GM12878 (cell line): ENCODE measurements at regions of chr3 and their contacts with region 1.

Region 1: GRCh38 chr3:128969993-128970739 is 23.7 kb downstream of the CFAP92 start:
- DNase-seq: no peak
- ATAC-seq: peak; percentile 82
- H3K4me3 ChIP-seq: no peak overlapping the region
- H3K27ac ChIP-seq: no peak overlapping the region
- H3K4me1 ChIP-seq: no peaks in the 10 kb centered on the region
- H3K27me3 ChIP-seq: peaks cover 0 to 2% of the 10 kb centered on the region in 2 experiments; a peak in 1 of 4 replicates
- CTCF ChIP-seq: peak; percentile 87 to 91 (median 89)
- EP300 ChIP-seq: no peak
- POLR2A ChIP-seq: no peak
- RAD21 ChIP-seq: peak; percentile 94

Region 2: GRCh38 chr3:128993461-128994173 is 23.5 kb after region 1 on chr3 and contains the start of gene CFAP92:
- CTCF ChIA-PET with region 1: interaction called, 18 read pairs
- POLR2A ChIA-PET with region 1: no interaction called
- RAD21 ChIA-PET with region 1: interaction called, 3 read pairs
- SMC1A ChIA-PET with region 1: interaction called, 3 read pairs
- in situ Hi-C with region 1: no loop called
- intact Hi-C with region 1: no loop called
- DNase-seq: no peak
- ATAC-seq: peak; percentile 99
- H3K4me3 ChIP-seq: no peak within 1 kb of the TSS
- H3K27ac ChIP-seq: no peak within 1 kb of the TSS
- H3K4me1 ChIP-seq: 0 out of 2 replicates have a peak, but pooled peaks cover 4% of the 10 kb centered on the region
- H3K27me3 ChIP-seq: peaks cover 2 to 8% of the 10 kb centered on the region in 2 experiments
- CTCF ChIP-seq: no peak
- EP300 ChIP-seq: no peak
- POLR2A ChIP-seq: no peak
- RAD21 ChIP-seq: no peak
- polyA plus RNA-seq, gene CFAP92: 0.05 TPM in 1 of 2 experiments, not detected in the other

Region 3: DNA sequence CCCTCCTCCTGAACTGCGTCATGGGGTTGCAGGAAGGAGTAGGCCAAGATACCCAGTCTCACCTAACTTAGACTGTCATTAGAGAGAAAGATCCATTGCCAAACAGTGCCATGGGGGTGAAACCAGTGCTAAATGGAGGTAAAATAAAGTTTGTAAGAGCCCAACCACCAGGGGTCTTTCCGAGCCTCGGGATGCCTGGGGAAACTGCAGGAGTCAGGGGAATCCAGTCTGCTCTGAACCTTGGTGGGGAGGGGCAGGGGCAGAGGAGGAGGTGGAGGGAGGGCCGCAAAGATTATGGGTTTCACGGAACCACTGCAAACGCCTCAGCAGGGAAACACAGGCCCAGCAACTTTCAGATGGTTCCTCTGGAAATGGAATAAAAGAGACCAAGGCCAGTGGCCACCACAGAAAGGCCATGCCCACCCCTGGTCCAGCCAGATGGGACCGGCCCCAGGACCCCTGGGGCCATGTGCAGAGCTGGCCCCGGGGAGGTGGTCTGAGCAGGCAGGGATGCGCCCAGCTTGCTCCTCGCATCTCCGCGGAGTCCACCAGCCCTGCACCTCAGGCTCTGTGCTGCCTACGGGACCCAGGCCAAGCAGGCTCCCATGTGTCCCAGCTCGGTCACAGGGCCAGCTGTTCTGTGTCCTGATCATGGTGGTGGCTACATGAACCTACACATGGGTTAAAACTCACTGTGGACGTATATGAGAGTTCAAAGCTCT is 70.6 kb after region 1 on chr3:
- CTCF ChIA-PET with region 1: interaction called, 10 read pairs
- POLR2A ChIA-PET with region 1: no interaction called
- RAD21 ChIA-PET with region 1: interaction called, 3 read pairs
- SMC1A ChIA-PET with region 1: no interaction called
- in situ Hi-C with region 1: no loop called
- intact Hi-C with region 1: no loop called
- DNase-seq: no peak
- ATAC-seq: no peak
- H3K4me3 ChIP-seq: no peak overlapping the region
- H3K27ac ChIP-seq: no peak overlapping the region
- H3K4me1 ChIP-seq: no peaks in the 10 kb centered on the region
- H3K27me3 ChIP-seq: no peaks in the 10 kb centered on the region; a peak in 2 of 4 replicates
- CTCF ChIP-seq: no peak
- EP300 ChIP-seq: no peak
- POLR2A ChIP-seq: no peak
- RAD21 ChIP-seq: no peak

Region 4: DNA sequence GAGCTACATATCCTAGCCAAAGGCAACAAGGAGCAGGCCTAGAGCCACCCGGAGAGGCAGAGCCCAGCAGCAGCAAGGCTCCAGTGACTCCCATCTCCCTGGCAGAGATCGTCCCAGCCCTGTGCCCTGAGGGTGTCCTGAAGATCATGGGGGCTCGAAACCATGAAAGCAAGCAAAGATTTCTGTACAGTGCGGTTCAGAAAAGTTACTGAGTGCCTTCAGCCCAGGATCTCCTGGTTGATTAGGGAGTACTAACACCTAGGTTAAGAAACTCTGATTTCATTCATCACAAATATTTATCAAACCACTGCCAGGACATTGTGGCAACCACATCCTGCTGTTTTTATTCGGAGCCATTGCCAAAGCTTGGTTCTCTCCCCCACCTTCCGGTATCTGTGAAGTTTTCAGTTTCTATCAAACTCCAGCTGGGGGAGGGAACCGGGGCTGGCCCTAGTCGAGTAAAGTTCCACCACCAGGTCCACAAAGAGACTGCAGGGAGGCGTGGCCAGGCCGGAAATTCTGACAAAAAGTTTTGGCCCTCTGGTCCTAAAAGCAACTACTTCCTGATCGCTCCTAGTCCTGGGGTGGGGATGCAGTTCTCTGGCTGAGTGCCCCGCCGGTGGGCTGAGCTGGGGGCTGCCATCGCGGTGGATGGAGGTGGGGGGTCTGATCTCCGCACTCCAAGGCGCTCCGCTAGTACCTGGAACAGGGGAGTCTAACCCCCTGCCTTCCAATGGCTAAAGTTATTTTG is 150.3 kb after region 1 on chr3:
- CTCF ChIA-PET with region 1: interaction called, 11 read pairs
- POLR2A ChIA-PET with region 1: interaction called, 7 read pairs
- RAD21 ChIA-PET with region 1: interaction called, 3 read pairs
- SMC1A ChIA-PET with region 1: interaction called, 6 read pairs
- in situ Hi-C with region 1: no loop called
- intact Hi-C with region 1: no loop called
- DNase-seq: peak; percentile 89
- ATAC-seq: peak; percentile 82
- H3K4me3 ChIP-seq: peak overlapping the region; percentile 65
- H3K27ac ChIP-seq: peak overlapping the region; percentile 97
- H3K4me1 ChIP-seq: peaks cover 27% of the 10 kb centered on the region
- H3K27me3 ChIP-seq: no peaks in the 10 kb centered on the region
- CTCF ChIP-seq: peak; percentile 13 to 19 (median 18); a peak in 4 of 6 replicates
- EP300 ChIP-seq: no peak
- POLR2A ChIP-seq: peak; percentile 82
- RAD21 ChIP-seq: 0 out of 2 replicates have a peak, but pooled peaks have one; percentile 27

Region 5: DNA sequence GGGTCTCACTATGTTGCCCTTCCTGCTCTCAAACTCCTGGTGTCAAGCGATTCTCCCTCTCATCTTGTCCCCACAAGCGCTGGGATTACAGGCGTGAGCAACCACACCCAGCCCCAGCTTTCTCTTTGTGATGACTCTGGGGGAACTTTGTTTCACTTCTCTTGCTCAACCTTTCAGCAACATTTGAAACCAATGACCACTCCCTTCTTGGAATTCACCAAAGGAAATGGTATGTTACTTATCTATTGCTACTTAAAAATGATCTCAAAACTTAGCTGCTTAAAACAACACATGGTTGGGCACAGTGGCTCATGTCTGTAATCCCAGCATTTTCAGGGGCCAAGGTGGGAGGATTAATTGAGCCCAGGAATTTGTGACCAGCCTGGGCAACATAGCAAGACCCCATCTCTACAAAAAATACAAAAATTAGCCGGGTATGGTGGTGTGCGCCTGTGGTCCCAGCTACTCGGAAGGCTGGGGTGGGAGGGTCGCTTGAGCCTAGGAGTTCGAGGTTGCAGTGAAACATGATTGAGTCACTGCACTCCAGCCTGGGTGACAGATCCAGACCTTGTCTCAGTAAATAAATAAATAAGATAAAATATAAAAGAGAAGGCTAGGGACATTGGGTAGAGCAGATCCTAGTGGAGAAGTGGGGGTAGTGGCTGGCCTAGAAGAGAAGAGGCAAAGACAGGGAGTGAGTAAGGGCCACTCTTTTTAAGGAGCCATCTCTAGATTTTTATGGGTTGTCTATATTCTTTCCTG is 269.0 kb after region 1 on chr3:
- CTCF ChIA-PET with region 1: interaction called, 120 read pairs
- POLR2A ChIA-PET with region 1: no interaction called
- RAD21 ChIA-PET with region 1: interaction called, 50 read pairs
- SMC1A ChIA-PET with region 1: interaction called, 53 read pairs
- in situ Hi-C with region 1: no loop called
- intact Hi-C with region 1: no loop called
- DNase-seq: no peak
- ATAC-seq: peak; percentile 81
- H3K4me3 ChIP-seq: no peak overlapping the region; the same call in 1 of the 2 replicates
- H3K27ac ChIP-seq: no peak overlapping the region
- H3K4me1 ChIP-seq: peaks cover 13% of the 10 kb centered on the region
- H3K27me3 ChIP-seq: no peaks in the 10 kb centered on the region
- CTCF ChIP-seq: no peak
- EP300 ChIP-seq: no peak
- POLR2A ChIP-seq: no peak
- RAD21 ChIP-seq: no peak

Region 6: GRCh38 chr3:129323651-129324294 is 353.6 kb after region 1 on chr3:
- CTCF ChIA-PET with region 1: interaction called, 11 read pairs
- POLR2A ChIA-PET with region 1: no interaction called
- RAD21 ChIA-PET with region 1: interaction called, 5 read pairs
- SMC1A ChIA-PET with region 1: interaction called, 4 read pairs
- in situ Hi-C with region 1: no loop called
- intact Hi-C with region 1: no loop called
- DNase-seq: no peak
- ATAC-seq: peak; percentile 81
- H3K4me3 ChIP-seq: no peak overlapping the region
- H3K27ac ChIP-seq: no peak overlapping the region
- H3K4me1 ChIP-seq: peaks cover 4% of the 10 kb centered on the region; the same call in 1 of the 2 replicates
- H3K27me3 ChIP-seq: peaks cover 0 to 3% of the 10 kb centered on the region in 2 experiments; a peak in 2 of 4 replicates
- CTCF ChIP-seq: peak; percentile 39 to 64 (median 45)
- EP300 ChIP-seq: no peak
- POLR2A ChIP-seq: no peak
- RAD21 ChIP-seq: peak; percentile 33